Ovary (tissue), 10 donors: ENCODE measurements at regions of chr12 and their contacts with region 1.

Region 1: DNA sequence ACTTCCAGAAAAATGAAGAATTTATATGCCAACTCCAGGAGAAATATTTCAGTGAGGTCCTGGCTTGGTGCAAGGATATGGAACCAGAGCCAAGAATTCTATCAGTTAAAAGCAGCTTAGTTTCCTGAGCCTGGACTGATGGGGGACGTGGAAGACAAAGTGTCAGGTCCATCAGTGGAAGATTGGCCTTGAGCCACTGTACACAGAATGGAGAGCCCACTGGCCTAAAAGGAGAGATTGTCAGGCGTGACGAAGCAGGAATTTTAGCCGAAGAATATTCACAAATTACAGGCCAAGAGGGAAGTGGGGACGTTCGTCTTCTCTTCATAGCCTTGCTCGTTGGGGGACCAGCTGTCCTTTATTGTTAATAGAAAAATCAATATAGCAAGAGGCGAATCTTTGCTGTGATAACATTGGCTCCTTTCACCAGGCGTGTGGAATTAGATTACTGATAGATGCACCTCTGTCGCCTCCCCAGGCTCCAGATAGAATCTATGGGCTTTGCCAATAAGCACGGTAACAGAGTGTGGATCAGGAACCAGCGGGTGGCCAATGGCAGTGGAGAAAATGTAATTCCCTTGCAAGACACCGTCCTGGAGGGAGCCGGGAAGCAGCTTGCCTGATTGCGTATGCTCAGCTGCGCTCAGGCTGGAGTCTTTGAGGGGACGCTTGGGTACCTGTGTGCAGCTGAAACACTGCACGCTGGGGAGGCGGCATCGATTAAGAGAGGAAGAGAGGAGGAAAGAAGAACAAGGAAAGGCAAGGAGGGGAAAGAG is 56.4 kb downstream of the TMEM132C start:
- DNase-seq: no peak
- H3K4me3 ChIP-seq: no peak overlapping the region
- H3K27ac ChIP-seq: no peak overlapping the region
- H3K4me1 ChIP-seq: no peaks in the 10 kb centered on the region
- H3K27me3 ChIP-seq: no peaks in the 10 kb centered on the region
- CTCF ChIP-seq: no peak
- EP300 ChIP-seq: no peak
- POLR2A ChIP-seq: no peak

Region 2: DNA sequence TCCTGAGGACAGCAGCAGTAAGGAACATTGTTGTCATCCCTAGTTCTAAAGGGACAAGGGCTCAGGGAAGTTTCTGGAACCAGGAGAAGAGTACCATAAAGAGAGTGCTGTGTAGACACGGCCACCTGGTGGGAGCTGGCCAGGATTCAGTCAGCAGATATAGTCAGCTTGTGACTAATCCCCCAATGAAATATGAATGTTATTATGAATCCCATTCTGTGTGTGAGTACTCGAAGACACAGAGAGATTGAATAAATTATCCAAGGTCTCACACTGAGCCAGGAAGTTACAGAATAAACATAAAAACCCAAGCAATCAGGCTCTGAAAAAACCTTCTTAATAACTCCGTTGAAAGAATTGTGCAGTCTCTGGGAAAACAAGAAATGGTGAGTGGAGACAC is 1898.6 kb before region 1 on chr12:
- intact Hi-C with region 1: loop called in 1 of 4 experiments (anchors 5 kb)
- DNase-seq: no peak
- H3K4me3 ChIP-seq: no peak overlapping the region
- H3K27ac ChIP-seq: no peak overlapping the region
- H3K4me1 ChIP-seq: no peaks in the 10 kb centered on the region
- H3K27me3 ChIP-seq: no peaks in the 10 kb centered on the region
- CTCF ChIP-seq: no peak
- EP300 ChIP-seq: no peak
- POLR2A ChIP-seq: no peak